ENCODE measurements at regions of chr3 and their contacts with region 1.

Region 1: GRCh38 chr3:150168698-150169097 is 198.0 kb upstream of the PFN2 start:
- DNase-seq: peak in 4 of 5 donors; percentile 70 to 78 (median 72)
- ATAC-seq: peak; percentile 93 to 94 (median 94)
- H3K4me3 ChIP-seq: no peak overlapping the region
- H3K27ac ChIP-seq: peak overlapping the region; percentile 41 to 88 (median 66)
- H3K4me1 ChIP-seq: peaks cover 0 to 26% (median 6%) of the 10 kb centered on the region in 12 donors
- H3K27me3 ChIP-seq: no peaks in the 10 kb centered on the region
- CTCF ChIP-seq: no peak
- POLR2A ChIP-seq: no peak

Region 2: DNA sequence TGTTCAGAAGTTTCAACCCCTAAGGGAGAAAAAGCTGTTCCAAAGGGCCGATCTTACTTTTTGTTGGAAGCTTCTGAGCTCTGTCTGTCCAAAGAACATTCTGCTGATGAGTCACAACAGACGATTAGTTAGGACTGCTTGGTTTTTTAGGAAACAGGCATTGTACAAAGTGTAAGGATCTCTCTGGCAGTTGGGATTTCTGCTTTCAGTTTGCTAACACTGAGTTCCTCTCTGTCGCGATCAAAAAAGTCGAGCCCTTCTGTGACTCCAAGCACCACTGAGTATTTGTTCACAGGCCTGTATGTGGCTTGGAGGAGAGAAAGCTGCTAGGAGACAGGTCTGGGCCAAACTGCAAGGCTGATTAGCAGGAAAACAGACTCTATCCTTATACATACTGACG is 106.2 kb before region 1 on chr3:
- intact Hi-C with region 1: loop called in 1 of 10 experiments (anchors 5 kb)
- DNase-seq: no peak
- ATAC-seq: peak; percentile 41 to 79 (median 62)
- H3K4me3 ChIP-seq: peak overlapping the region in 5 of 12 donors; percentile 1 to 40 (median 29)
- H3K27ac ChIP-seq: peak overlapping the region in 9 of 12 donors; percentile 8 to 65 (median 55)
- H3K4me1 ChIP-seq: peaks cover 0 to 21% (median 4%) of the 10 kb centered on the region in 12 donors
- H3K27me3 ChIP-seq: no peaks in the 10 kb centered on the region
- CTCF ChIP-seq: no peak
- POLR2A ChIP-seq: no peak

Region 3: DNA sequence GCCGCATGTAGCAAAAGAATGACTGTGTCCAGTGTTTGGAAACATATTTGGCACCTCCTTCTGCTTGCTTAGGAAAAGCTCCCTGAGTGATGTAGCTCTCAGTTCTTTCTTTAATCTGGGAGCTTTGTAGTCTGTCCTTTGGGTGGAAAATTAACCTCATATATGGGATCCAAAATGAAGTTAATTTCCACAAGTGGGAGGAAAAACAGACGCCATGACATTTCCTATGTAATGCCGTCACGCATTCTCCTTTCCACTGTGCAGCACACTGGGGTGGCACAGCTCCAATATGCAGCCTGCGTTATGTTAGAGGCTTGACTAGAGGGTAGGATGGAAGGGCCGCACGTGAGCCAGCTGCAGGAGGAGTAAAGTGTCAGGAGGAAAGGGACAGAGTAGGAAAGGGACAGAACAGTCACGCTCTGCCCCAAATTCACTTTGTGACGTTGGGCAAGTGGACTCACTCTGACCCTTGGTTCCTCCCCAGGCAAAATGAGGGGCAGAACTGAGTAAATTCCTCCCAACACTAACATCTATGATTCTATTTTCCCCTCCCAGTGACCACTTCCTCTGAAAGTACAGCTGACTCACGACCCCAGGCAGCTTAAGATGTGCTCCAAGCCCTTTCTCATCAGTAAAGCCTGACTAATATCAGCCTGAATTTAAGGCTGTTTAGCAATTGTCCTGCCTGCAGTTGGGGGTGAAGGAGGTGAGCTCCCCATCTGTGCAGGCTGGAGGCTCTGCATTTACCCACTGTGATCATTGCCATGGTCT is 21.5 kb before region 1 on chr3:
- intact Hi-C with region 1: loop called in 1 of 10 experiments (anchors 1 kb)
- DNase-seq: peak in 1 of 5 donors; percentile 34
- ATAC-seq: peak in 3 of 4 donors; percentile 19 to 54 (median 37)
- H3K4me3 ChIP-seq: no peak overlapping the region
- H3K27ac ChIP-seq: peak overlapping the region in 2 of 12 donors; percentile 55 to 68
- H3K4me1 ChIP-seq: peaks cover 0 to 17% (median 2%) of the 10 kb centered on the region in 12 donors
- H3K27me3 ChIP-seq: no peaks in the 10 kb centered on the region
- CTCF ChIP-seq: no peak
- POLR2A ChIP-seq: no peak